GM12878 (cell line): ENCODE measurements at regions of chr9 and their contacts with region 1.

Region 1: GRCh38 chr9:71628247-71628646 is 140.1 kb downstream of the CEMIP2 start:
- DNase-seq: no peak
- ATAC-seq: no peak; the same call in 2 of the 3 replicates
- H3K4me3 ChIP-seq: no peak overlapping the region
- H3K27ac ChIP-seq: no peak overlapping the region
- H3K4me1 ChIP-seq: no peaks in the 10 kb centered on the region
- H3K27me3 ChIP-seq: no peaks in the 10 kb centered on the region
- CTCF ChIP-seq: peak; percentile 20 to 30 (median 24); a peak in 3 of 6 replicates
- EP300 ChIP-seq: no peak
- POLR2A ChIP-seq: no peak
- RAD21 ChIP-seq: 0 out of 2 replicates have a peak, but pooled peaks have one; percentile 9

Region 2: GRCh38 chr9:71349218-71349617 is 279.0 kb before region 1 on chr9:
- CTCF ChIA-PET with region 1: no interaction called
- POLR2A ChIA-PET with region 1: no interaction called
- RAD21 ChIA-PET with region 1: no interaction called
- SMC1A ChIA-PET with region 1: no interaction called
- in situ Hi-C with region 1: no loop called
- intact Hi-C with region 1: no loop called
- DNase-seq: no peak
- ATAC-seq: no peak
- H3K4me3 ChIP-seq: no peak overlapping the region
- H3K27ac ChIP-seq: no peak overlapping the region
- H3K4me1 ChIP-seq: no peaks in the 10 kb centered on the region
- H3K27me3 ChIP-seq: no peaks in the 10 kb centered on the region
- CTCF ChIP-seq: no peak
- EP300 ChIP-seq: no peak
- POLR2A ChIP-seq: no peak
- RAD21 ChIP-seq: no peak

Region 3: DNA sequence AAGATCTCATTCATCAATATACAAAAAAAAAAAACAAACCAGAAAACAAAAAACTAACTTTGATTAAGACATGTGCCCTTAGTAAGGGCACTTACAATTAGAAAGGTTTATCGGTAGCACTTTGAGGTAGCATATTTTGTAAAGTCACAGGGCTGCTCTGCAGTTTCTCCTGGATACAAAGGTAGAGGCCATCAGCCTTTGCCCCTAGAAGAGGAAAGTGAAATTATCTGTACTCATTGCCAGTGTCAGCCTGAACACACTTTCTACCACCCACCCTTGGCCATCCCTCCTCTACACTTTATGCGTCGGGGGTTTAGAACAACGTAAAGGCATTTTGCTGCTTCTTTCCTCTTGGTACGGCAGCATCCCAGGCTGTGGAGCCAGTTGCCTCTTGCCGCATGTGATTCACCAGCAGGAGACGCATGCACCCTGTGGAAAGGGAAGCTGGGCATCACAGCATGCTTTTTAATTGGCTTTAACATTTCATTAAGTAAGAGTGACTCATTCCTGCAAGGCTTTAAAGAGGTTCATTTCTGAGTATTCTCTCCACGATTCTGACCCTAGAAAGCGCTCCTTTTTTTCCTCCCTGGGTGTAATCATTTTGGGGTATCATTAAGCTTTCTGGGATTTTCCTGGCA is 55.5 kb after region 1 on chr9:
- CTCF ChIA-PET with region 1: interaction called, 3 read pairs
- POLR2A ChIA-PET with region 1: no interaction called
- RAD21 ChIA-PET with region 1: interaction called, 7 read pairs
- SMC1A ChIA-PET with region 1: interaction called, 3 read pairs
- in situ Hi-C with region 1: no loop called
- intact Hi-C with region 1: loop called (anchors 10 kb)
- DNase-seq: no peak
- ATAC-seq: no peak
- H3K4me3 ChIP-seq: no peak overlapping the region
- H3K27ac ChIP-seq: no peak overlapping the region
- H3K4me1 ChIP-seq: no peaks in the 10 kb centered on the region
- H3K27me3 ChIP-seq: no peaks in the 10 kb centered on the region
- CTCF ChIP-seq: no peak
- EP300 ChIP-seq: no peak
- POLR2A ChIP-seq: no peak
- RAD21 ChIP-seq: no peak

Region 4: GRCh38 chr9:71716138-71716909 is 88.1 kb after region 1 on chr9:
- CTCF ChIA-PET with region 1: interaction called, 14 read pairs
- POLR2A ChIA-PET with region 1: no interaction called
- RAD21 ChIA-PET with region 1: interaction called, 3 read pairs
- SMC1A ChIA-PET with region 1: interaction called, 5 read pairs
- in situ Hi-C with region 1: no loop called
- intact Hi-C with region 1: no loop called
- DNase-seq: no peak
- ATAC-seq: no peak
- H3K4me3 ChIP-seq: no peak overlapping the region
- H3K27ac ChIP-seq: no peak overlapping the region
- H3K4me1 ChIP-seq: no peaks in the 10 kb centered on the region
- H3K27me3 ChIP-seq: no peaks in the 10 kb centered on the region
- CTCF ChIP-seq: peak in 2 of 3 experiments; percentile 17 to 25; a peak in 3 of 6 replicates
- EP300 ChIP-seq: no peak
- POLR2A ChIP-seq: no peak
- RAD21 ChIP-seq: no peak

Region 5: DNA sequence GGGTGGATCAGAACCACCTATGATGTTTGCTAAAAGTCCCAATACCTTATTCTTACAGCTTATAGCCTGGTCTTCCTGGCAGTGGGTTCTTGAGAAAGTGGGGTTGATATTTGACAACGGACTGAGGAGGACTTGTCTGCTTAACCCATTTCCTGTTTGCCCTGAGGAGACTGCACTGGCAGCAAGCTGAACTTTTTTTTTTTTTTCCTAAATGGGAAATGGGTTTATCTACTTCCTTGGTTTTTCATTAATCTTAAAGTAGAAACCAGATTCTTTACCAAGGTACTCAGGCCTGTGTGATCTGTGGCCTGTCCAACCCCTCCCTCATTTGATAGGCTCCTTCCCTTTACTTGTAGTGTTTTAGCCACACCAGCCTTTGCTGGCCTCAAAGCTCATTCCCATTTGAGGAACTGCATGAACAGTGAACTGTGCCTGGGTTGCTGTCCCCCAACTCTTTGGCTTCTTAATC is 385.1 kb after region 1 on chr9:
- CTCF ChIA-PET with region 1: no interaction called
- POLR2A ChIA-PET with region 1: no interaction called
- RAD21 ChIA-PET with region 1: no interaction called
- SMC1A ChIA-PET with region 1: no interaction called
- in situ Hi-C with region 1: loop called (anchors 10 kb)
- intact Hi-C with region 1: no loop called
- DNase-seq: no peak
- ATAC-seq: no peak
- H3K4me3 ChIP-seq: no peak overlapping the region
- H3K27ac ChIP-seq: no peak overlapping the region
- H3K4me1 ChIP-seq: no peaks in the 10 kb centered on the region
- H3K27me3 ChIP-seq: no peaks in the 10 kb centered on the region; a peak in 1 of 4 replicates
- CTCF ChIP-seq: no peak
- EP300 ChIP-seq: no peak
- POLR2A ChIP-seq: no peak
- RAD21 ChIP-seq: no peak

Region 6: DNA sequence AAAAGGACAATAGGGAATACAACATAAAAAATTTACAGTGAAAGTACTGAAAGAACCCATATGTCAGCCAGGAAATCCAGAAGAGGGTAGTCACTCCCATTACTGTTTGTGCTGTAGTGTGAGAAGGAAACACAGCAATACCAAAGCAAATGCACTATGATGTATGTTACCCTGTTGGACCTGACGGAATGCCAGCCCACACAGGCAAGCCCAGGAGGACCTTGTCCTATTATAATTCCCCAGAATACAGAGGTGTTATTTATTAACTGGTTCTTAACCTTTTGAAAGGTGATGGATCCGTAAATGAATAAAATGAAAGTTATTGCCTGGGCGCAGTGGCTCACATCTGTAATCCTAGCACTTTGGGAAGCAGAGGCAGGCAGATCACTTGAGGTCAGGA is 600.0 kb after region 1 on chr9:
- CTCF ChIA-PET with region 1: no interaction called
- POLR2A ChIA-PET with region 1: no interaction called
- RAD21 ChIA-PET with region 1: no interaction called
- SMC1A ChIA-PET with region 1: no interaction called
- in situ Hi-C with region 1: no loop called
- intact Hi-C with region 1: no loop called
- DNase-seq: no peak
- ATAC-seq: no peak
- H3K4me3 ChIP-seq: no peak overlapping the region
- H3K27ac ChIP-seq: no peak overlapping the region
- H3K4me1 ChIP-seq: no peaks in the 10 kb centered on the region
- H3K27me3 ChIP-seq: no peaks in the 10 kb centered on the region
- CTCF ChIP-seq: no peak
- EP300 ChIP-seq: no peak
- POLR2A ChIP-seq: no peak
- RAD21 ChIP-seq: no peak